CD14-positive monocyte (primary cell): ENCODE measurements at regions of chr2 and their contacts with region 1.

Region 1: DNA sequence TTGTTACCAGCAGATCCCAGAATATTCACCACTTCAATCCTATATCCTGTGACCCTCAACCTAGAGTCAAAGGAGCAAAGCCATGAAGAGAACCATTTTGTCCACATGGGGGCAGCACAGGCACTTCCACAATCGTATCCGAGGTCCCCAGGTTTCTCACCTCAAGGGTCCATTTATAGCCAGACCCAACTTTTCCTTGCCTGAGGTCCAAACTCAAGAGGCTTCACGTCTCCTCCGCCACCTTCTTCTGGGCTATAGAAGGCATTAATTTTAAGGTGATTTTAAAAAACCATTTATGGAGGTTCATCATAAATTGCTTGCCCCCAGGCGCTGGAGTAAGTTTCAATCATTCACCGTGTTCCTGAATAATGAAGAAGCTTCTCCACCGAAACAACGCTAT is 111.6 kb upstream of the NABP1 start:
- DNase-seq: peak; percentile 44 to 70 (median 69)
- H3K4me3 ChIP-seq: no peak overlapping the region
- H3K4me3 Mint-ChIP-seq: no peak overlapping the region
- H3K27ac ChIP-seq: no peak overlapping the region
- H3K27ac Mint-ChIP-seq: no peak overlapping the region
- H3K4me1 ChIP-seq: peaks cover 22 to 31% of the 10 kb centered on the region in 2 donors
- H3K4me1 Mint-ChIP-seq: peaks cover 24% of the 10 kb centered on the region
- H3K27me3 ChIP-seq: no peaks in the 10 kb centered on the region
- H3K27me3 Mint-ChIP-seq: peaks cover 0 to 3% (median 1%) of the 10 kb centered on the region in 3 donors
- CTCF ChIP-seq: peak; percentile 91

Region 2: GRCh38 chr2:191274413-191274815 is 291.9 kb before region 1 on chr2:
- intact Hi-C with region 1: no loop called
- DNase-seq: no peak
- H3K4me3 ChIP-seq: no peak overlapping the region
- H3K4me3 Mint-ChIP-seq: no peak overlapping the region
- H3K27ac ChIP-seq: no peak overlapping the region
- H3K27ac Mint-ChIP-seq: no peak overlapping the region
- H3K4me1 ChIP-seq: peaks cover 0 to 4% of the 10 kb centered on the region in 2 donors
- H3K4me1 Mint-ChIP-seq: peaks cover 8% of the 10 kb centered on the region
- H3K27me3 ChIP-seq: no peaks in the 10 kb centered on the region
- H3K27me3 Mint-ChIP-seq: no peaks in the 10 kb centered on the region
- CTCF ChIP-seq: no peak

Region 3: GRCh38 chr2:191436368-191437055 is 129.8 kb before region 1 on chr2:
- intact Hi-C with region 1: no loop called
- DNase-seq: peak; percentile 55 to 58 (median 58)
- H3K4me3 ChIP-seq: peak overlapping the region in 2 of 3 experiments; percentile 16 to 57
- H3K4me3 Mint-ChIP-seq: peak overlapping the region; percentile 28 to 80
- H3K27ac ChIP-seq: peak overlapping the region; percentile 58 to 87
- H3K27ac Mint-ChIP-seq: peak overlapping the region; percentile 86 to 95 (median 94)
- H3K4me1 ChIP-seq: peaks cover 37 to 38% of the 10 kb centered on the region in 2 donors
- H3K4me1 Mint-ChIP-seq: peaks cover 41% of the 10 kb centered on the region
- H3K27me3 ChIP-seq: no peaks in the 10 kb centered on the region
- H3K27me3 Mint-ChIP-seq: peaks cover 0 to 2% (median 0%) of the 10 kb centered on the region in 3 donors
- CTCF ChIP-seq: no peak

Region 4: DNA sequence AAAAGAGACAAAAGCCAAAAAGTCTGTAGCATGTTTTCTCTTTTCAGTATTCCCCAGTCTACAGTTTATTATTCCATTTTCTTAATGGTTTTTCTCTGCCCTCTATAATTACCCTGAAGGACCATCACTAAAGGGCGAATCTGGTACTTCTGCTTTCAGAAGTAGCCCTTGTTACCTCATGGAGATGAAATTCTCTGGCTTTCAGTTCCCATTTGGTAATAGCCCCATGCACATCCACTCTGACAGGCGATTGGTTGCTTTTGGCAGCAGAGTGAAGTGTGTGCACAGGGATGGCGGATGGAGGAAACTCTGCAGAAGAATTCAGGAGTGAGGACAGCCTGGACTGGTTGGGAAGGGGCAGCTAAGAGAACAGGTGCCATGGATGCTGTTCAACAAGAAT is 45.3 kb after region 1 on chr2:
- intact Hi-C with region 1: loop called in 1 of 2 experiments (anchors 5 kb)
- DNase-seq: peak; percentile 80 to 91 (median 90)
- H3K4me3 ChIP-seq: peak overlapping the region in 1 of 3 experiments; percentile 52
- H3K4me3 Mint-ChIP-seq: peak overlapping the region; percentile 20 to 63
- H3K27ac ChIP-seq: peak overlapping the region; percentile 65 to 72
- H3K27ac Mint-ChIP-seq: peak overlapping the region; percentile 88 to 97 (median 95)
- H3K4me1 ChIP-seq: peaks cover 29 to 44% of the 10 kb centered on the region in 2 donors
- H3K4me1 Mint-ChIP-seq: peaks cover 32% of the 10 kb centered on the region
- H3K27me3 ChIP-seq: no peaks in the 10 kb centered on the region
- H3K27me3 Mint-ChIP-seq: peaks cover 0 to 2% (median 0%) of the 10 kb centered on the region in 3 donors
- CTCF ChIP-seq: no peak

Region 5: DNA sequence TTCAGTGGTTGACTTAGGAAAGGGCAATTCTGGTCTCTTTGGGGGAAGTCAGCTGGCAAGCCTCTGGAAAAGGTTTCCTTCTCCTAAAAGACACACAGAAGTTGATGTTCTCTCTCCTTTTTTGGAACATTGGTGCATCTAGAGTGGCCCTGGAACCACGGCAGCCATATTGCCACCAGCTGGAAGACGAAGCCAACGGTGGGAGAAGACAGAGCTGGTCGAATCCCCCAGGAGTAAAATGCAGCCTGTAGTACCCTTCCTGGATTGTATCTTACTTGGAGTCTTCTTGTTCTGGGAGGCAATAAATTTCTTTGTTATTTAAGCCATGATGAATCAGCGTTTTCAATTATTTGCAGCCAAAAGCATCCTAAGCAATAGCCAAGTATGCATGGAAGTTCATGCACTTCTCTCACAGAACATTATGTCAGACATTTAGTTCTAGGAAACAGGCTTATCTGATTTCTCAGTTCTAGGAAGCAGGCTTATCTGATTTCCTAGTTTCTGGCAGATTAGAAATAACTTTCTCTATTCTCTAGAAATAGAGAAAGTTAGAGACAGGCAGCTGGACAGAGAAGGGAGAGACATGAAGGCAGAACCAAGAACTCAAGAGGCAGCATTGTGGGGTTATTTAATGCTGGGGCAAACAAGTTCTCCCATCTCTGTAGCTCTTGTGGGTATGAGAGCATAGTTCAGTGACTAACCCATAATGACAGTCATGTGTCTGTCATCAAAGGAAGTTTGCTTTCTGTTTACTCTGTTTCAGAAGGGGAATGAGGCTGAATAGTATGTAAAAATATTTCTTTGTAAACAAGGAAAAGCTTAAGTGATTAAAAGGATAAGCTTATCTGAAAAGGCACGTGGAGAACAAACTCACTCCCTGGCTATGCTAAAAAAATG is 71.1 kb after region 1 on chr2:
- intact Hi-C with region 1: loop called in 1 of 2 experiments (anchors 10 kb)
- DNase-seq: peak; percentile 63 to 81 (median 71)
- H3K4me3 ChIP-seq: peak overlapping the region in 2 of 3 experiments; percentile 11 to 48
- H3K4me3 Mint-ChIP-seq: peak overlapping the region; percentile 34 to 72
- H3K27ac ChIP-seq: peak overlapping the region; percentile 67 to 84
- H3K27ac Mint-ChIP-seq: peak overlapping the region; percentile 87 to 96 (median 93)
- H3K4me1 ChIP-seq: peaks cover 24 to 27% of the 10 kb centered on the region in 2 donors
- H3K4me1 Mint-ChIP-seq: peaks cover 27% of the 10 kb centered on the region
- H3K27me3 ChIP-seq: no peaks in the 10 kb centered on the region
- H3K27me3 Mint-ChIP-seq: no peaks in the 10 kb centered on the region
- CTCF ChIP-seq: no peak

Region 6: DNA sequence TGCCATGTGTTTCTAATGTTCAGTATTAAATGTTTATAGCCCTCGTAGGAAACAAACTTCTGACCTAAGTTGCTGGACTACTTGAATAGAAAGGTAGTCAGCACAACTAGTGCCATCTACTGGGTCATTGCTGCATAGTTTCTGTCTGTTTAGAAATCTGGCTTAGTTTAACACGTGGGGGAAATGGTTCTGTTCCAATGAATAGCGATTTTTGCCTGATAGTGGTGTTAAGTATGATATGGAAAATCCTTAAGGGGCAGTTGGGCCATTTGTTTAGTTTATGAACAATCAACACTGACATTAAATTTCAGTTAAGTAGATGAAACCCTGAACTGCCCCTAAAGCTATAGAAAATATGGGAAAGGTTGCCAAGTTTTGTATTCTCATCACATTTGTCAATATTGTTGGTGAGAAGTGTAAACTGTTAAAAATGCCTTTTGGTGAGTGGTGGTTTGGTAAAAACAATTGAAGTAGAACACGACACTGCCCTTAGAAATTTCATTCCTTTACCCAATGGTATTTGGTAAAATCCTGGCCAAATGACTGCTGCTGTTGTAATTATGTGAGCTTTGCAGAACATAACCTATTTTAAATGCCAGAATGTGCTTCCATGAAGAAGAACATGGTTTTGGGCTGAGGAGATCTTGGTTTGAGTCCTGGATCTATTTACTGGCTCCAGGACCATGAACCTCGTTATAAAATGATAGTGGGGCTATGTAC is 124.8 kb after region 1 on chr2:
- intact Hi-C with region 1: loop called (anchors 2 to 5 kb)
- DNase-seq: peak; percentile 61 to 80 (median 71)
- H3K4me3 ChIP-seq: no peak overlapping the region
- H3K4me3 Mint-ChIP-seq: peak overlapping the region in 1 of 2 donors; percentile 47
- H3K27ac ChIP-seq: no peak overlapping the region
- H3K27ac Mint-ChIP-seq: peak overlapping the region in 1 of 7 donors; percentile 54
- H3K4me1 ChIP-seq: peaks cover 8 to 11% of the 10 kb centered on the region in 2 donors
- H3K4me1 Mint-ChIP-seq: peaks cover 8% of the 10 kb centered on the region
- H3K27me3 ChIP-seq: peaks cover 2 to 3% of the 10 kb centered on the region in 2 donors
- H3K27me3 Mint-ChIP-seq: peaks cover 0 to 2% (median 2%) of the 10 kb centered on the region in 3 donors
- CTCF ChIP-seq: peak; percentile 75